ENCODE measurements at regions of chr1 and their contacts with region 1.

Region 1: GRCh38 chr1:37449936-37450335 is 24.4 kb upstream of the ZC3H12A start:
- DNase-seq: no peak
- H3K4me3 ChIP-seq: no peak overlapping the region
- H3K27ac ChIP-seq: no peak overlapping the region
- H3K4me1 ChIP-seq: no peaks in the 10 kb centered on the region
- H3K27me3 ChIP-seq: no peaks in the 10 kb centered on the region
- CTCF ChIP-seq: no peak

Region 2: GRCh38 chr1:37682334-37682987 is 232.5 kb after region 1 on chr1:
- intact Hi-C with region 1: loop called (anchors 5 kb)
- DNase-seq: peak in 1 of 2 donors; percentile 84
- H3K4me3 ChIP-seq: no peak overlapping the region
- H3K27ac ChIP-seq: peak overlapping the region in 1 of 2 donors; percentile 44
- H3K4me1 ChIP-seq: no peaks in the 10 kb centered on the region
- H3K27me3 ChIP-seq: no peaks in the 10 kb centered on the region
- CTCF ChIP-seq: peak; percentile 67 to 85 (median 76)